ENCODE measurements at regions of chr16 and their contacts with region 1.

Region 1: GRCh38 chr16:84504420-84505248 is at the start of gene MEAK7:
- DNase-seq: peak; percentile 98
- ATAC-seq: peak; percentile 94
- H3K4me3 Mint-ChIP-seq: peak within 1 kb of the TSS; percentile 80
- H3K27ac Mint-ChIP-seq: peak within 1 kb of the TSS; percentile 94
- H3K4me1 Mint-ChIP-seq: peaks cover 65% of the 10 kb centered on the region
- H3K27me3 Mint-ChIP-seq: no peaks in the 10 kb centered on the region
- total RNA-seq, gene MEAK7: 37.9 to 73.9 TPM

Region 2: DNA sequence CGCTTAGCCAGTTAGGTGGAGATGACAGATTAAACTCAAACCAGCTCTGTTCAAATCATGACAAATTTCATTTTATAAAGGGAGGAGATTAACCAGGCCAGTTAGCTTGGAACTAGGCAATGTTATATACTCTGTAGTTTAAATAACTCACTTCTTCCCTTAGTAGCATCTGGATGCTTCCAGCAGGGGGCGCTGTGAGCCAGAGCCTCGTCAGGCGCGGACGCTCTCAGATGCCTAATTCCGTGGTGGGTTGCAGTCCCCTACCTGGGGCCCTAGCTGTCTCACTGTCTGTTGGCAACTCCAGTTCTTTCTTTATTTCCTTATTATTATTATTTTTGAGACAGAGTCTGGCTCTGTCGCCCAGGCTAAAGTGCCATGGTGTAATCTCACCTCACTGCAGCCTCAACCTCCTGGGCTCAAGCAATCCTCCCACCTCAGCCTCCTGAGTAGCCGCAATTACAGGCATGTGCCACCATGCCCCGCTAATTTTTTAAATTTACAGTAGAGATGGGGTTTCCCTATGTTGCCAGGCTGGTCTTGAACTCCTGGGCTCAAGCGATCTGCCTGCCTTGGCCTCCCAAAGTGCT is 227.3 kb before region 1 on chr16:
- CTCF ChIA-PET with region 1: interaction called, 28 read pairs
- DNase-seq: peak; percentile 73
- ATAC-seq: peak; percentile 84
- H3K4me3 Mint-ChIP-seq: no peak overlapping the region
- H3K27ac Mint-ChIP-seq: no peak overlapping the region
- H3K4me1 Mint-ChIP-seq: no peaks in the 10 kb centered on the region
- H3K27me3 Mint-ChIP-seq: peaks cover 10% of the 10 kb centered on the region

Region 3: DNA sequence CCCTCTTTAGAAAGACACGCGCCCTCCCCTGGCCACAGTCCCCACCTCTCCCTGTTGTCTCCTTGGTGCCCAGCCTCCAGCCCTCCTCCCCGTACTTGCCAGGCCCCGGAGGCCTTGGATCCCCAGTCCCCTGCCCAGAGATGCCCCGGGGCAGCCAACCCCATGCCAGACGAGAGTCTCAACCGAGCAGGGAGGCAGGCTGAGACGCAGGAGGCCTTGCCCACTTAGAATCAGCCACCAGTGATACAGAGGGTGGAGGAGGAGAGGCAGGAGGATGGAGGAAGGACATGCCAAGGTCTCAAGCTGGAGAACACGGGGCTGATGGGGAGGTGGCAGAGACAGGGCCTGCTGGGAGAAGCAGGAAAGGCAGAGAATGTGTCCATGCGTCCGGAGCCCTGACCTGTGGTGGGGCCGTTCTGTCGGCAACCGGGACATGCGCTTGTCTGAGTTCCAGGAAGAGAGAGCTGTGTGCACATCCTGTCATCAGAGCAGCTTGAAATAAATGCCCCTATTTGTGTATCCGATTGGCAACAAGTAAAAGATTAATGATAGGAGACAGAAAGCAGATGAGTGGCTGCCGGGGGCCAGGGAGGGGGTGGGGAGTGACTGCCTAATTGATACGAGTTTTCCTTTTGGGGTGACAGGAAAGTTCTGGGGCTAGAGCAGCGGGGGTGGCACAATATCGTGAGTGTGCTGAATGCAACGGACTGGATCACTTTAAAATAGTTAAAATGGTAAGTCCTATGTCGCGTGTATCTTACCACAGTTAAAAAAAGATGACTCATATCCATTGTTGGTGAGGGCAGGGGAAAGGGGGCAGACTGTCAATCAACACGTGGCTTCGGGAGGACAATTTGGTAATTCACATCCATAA is 44.6 kb after region 1 on chr16:
- CTCF ChIA-PET with region 1: interaction called, 28 read pairs
- DNase-seq: peak; percentile 76
- ATAC-seq: peak; percentile 53
- H3K4me3 Mint-ChIP-seq: peak overlapping the region; percentile 85
- H3K27ac Mint-ChIP-seq: peak overlapping the region; percentile 96
- H3K4me1 Mint-ChIP-seq: peaks cover 53% of the 10 kb centered on the region
- H3K27me3 Mint-ChIP-seq: no peaks in the 10 kb centered on the region

Region 4: DNA sequence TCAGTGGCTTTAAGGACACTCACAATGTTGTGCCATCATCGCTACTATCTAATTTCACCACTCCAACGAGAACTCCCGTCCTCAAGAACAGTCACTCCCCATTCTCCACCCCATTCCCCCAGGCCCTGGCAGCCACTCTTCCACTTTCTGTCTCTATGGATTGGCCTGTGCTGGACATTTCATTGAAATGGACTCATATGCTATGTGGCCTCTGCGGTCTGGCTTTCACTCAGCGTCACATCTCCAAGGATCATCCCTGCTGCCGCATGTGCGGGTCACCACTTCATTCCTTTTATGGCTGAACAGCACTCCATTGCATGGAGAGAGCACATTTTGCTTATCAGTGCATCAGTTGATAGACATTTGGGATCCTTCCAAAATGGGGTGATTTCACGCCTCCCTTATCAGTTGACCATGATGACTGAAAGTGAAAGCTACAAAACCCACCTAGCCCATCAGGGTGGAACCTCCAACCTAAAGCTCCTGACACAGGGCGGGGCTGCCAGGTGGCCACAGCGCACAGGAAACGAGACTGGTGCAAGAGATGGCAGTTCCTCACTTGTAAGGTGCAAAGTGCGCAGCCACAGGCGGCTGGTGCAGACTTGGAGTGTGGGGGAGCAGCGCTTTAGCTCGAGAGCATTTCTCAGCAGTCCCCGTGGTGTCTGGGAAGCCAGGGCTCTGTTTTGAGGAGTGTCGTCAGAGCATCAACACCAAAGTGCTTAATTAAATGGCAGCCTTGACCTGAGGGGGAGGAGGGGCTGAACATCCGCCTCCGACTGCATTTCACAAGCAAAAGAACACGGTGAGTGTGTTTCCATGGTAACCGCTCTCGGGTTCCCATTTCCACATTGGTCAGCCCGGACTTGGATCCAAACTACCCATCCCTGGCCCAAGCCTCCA is 89.4 kb after region 1 on chr16:
- CTCF ChIA-PET with region 1: interaction called, 12 read pairs
- DNase-seq: peak; percentile 98
- ATAC-seq: peak; percentile 82
- H3K4me3 Mint-ChIP-seq: peak overlapping the region; percentile 86
- H3K27ac Mint-ChIP-seq: peak overlapping the region; percentile 97
- H3K4me1 Mint-ChIP-seq: peaks cover 82% of the 10 kb centered on the region
- H3K27me3 Mint-ChIP-seq: no peaks in the 10 kb centered on the region

Region 5: GRCh38 chr16:84607694-84608093 is 103.1 kb after region 1 on chr16:
- CTCF ChIA-PET with region 1: interaction called, 25 read pairs
- DNase-seq: no peak
- ATAC-seq: peak; percentile 44
- H3K4me3 Mint-ChIP-seq: peak overlapping the region; percentile 96
- H3K27ac Mint-ChIP-seq: peak overlapping the region; percentile 91
- H3K4me1 Mint-ChIP-seq: peaks cover 96% of the 10 kb centered on the region
- H3K27me3 Mint-ChIP-seq: no peaks in the 10 kb centered on the region

Region 6: GRCh38 chr16:84726079-84726668 is 221.5 kb after region 1 on chr16:
- CTCF ChIA-PET with region 1: interaction called, 18 read pairs
- DNase-seq: peak; percentile 86
- ATAC-seq: peak; percentile 72
- H3K4me3 Mint-ChIP-seq: peak overlapping the region; percentile 52
- H3K27ac Mint-ChIP-seq: no peak overlapping the region
- H3K4me1 Mint-ChIP-seq: peaks cover 72% of the 10 kb centered on the region
- H3K27me3 Mint-ChIP-seq: no peaks in the 10 kb centered on the region

Region 7: GRCh38 chr16:84806256-84806889 is 301.7 kb after region 1 on chr16:
- CTCF ChIA-PET with region 1: no interaction called
- DNase-seq: peak; percentile 46
- ATAC-seq: peak; percentile 47
- H3K4me3 Mint-ChIP-seq: no peak overlapping the region
- H3K27ac Mint-ChIP-seq: no peak overlapping the region
- H3K4me1 Mint-ChIP-seq: peaks cover 17% of the 10 kb centered on the region
- H3K27me3 Mint-ChIP-seq: peaks cover under 1% of the 10 kb centered on the region

Measured in activated CD8-positive, alpha-beta memory T cell treated with anti-CD3 and anti-CD28 coated beads, Interleukin-2, amount 10 ng/mL, durations not matched to agents 7 days and 5 days (primary cell).